HepG2 (cell line): ENCODE measurements at regions of chr6 and their contacts with region 1.

Region 1: GRCh38 chr6:33288921-33289748 is at the starts of genes PFDN6 and WDR46:
- DNase-seq: peak; percentile 95
- ATAC-seq: peak; percentile 97
- H3K4me3 ChIP-seq: peak within 1 kb of the TSS; percentile 73 to 96 (median 94)
- H3K27ac ChIP-seq: peak within 1 kb of the TSS; percentile 56
- H3K4me1 ChIP-seq: peaks cover 22% of the 10 kb centered on the region
- H3K27me3 ChIP-seq: no peaks in the 10 kb centered on the region; a peak in 1 of 5 replicates
- CTCF ChIP-seq: 0 out of 2 replicates have a peak, but pooled peaks have one; percentile 3
- EP300 ChIP-seq: no peak; a peak in 1 of 4 replicates
- POLR2A ChIP-seq: peak; percentile 71 to 72
- RAD21 ChIP-seq: no peak
- total RNA-seq, gene PFDN6: 87.0 and 118 TPM in 2 replicates
- total RNA-seq, gene WDR46: 99.9 and 105 TPM in 2 replicates

Region 2: GRCh38 chr6:33213989-33214335 is 75.2 kb before region 1 on chr6:
- CTCF ChIA-PET with region 1: no interaction called
- POLR2A ChIA-PET with region 1: no interaction called
- in situ Hi-C with region 1: no loop called
- intact Hi-C with region 1: no loop called
- DNase-seq: no peak
- ATAC-seq: peak; percentile 9
- H3K4me3 ChIP-seq: peak overlapping the region; percentile 36 to 66 (median 50); a peak in 4 of 6 replicates
- H3K27ac ChIP-seq: no peak overlapping the region
- H3K4me1 ChIP-seq: peaks cover 28% of the 10 kb centered on the region
- H3K27me3 ChIP-seq: peaks cover 9 to 51% of the 10 kb centered on the region in 2 experiments; a peak in 4 of 5 replicates
- CTCF ChIP-seq: no peak
- EP300 ChIP-seq: no peak
- POLR2A ChIP-seq: no peak
- RAD21 ChIP-seq: no peak

Region 3: GRCh38 chr6:33317669-33318425 is 28.7 kb after region 1 on chr6 and contains the start of gene ZBTB22:
- CTCF ChIA-PET with region 1: no interaction called
- POLR2A ChIA-PET with region 1: interaction called, 26 read pairs
- in situ Hi-C with region 1: no loop called
- intact Hi-C with region 1: no loop called
- DNase-seq: peak; percentile 99
- ATAC-seq: peak; percentile 79
- H3K4me3 ChIP-seq: peak within 1 kb of the TSS; percentile 71 to 79 (median 73)
- H3K27ac ChIP-seq: peak within 1 kb of the TSS; percentile 82
- H3K4me1 ChIP-seq: peaks cover 55% of the 10 kb centered on the region
- H3K27me3 ChIP-seq: no peaks in the 10 kb centered on the region; a peak in 2 of 5 replicates
- CTCF ChIP-seq: no peak
- EP300 ChIP-seq: no peak
- POLR2A ChIP-seq: no peak
- RAD21 ChIP-seq: no peak
- total RNA-seq, gene ZBTB22: 6.6 and 8.0 TPM in 2 replicates